ENCODE measurements at regions of chr12 and their contacts with region 1.

Region 1: GRCh38 chr12:99367181-99367580 is 280.4 kb upstream of the GARIN6 start:
- DNase-seq: no peak
- H3K4me3 ChIP-seq: no peak overlapping the region
- H3K27ac ChIP-seq: no peak overlapping the region
- H3K4me1 ChIP-seq: no peaks in the 10 kb centered on the region
- H3K27me3 ChIP-seq: no peaks in the 10 kb centered on the region
- CTCF ChIP-seq: no peak
- POLR2A ChIP-seq: no peak

Region 2: DNA sequence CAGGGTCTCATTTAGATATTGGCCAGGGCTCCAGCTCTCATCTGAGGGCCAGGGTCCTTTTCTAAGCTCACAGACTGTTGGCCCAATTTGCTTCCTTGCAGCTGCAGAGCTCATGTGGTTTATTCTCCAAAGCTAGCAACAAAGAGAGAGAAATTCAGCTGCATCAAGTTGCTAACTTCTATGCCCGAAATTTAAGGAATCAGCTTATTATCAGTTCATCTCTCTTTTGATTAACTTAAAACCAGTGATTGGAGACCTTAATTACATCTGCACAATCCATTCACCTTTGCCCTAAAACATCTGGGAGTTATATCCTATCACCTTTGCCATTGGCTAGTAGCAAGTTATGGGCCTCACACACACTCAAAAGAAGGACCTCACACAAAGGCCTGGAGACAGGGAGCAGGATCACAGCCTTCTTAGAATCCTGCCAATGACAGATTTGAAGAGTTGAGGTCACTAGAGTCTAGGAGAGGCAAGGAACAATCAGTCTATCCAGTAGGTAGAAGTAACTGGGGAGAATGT is 21.6 kb after region 1 on chr12:
- intact Hi-C with region 1: loop called (anchors 1 kb)
- DNase-seq: no peak
- H3K4me3 ChIP-seq: no peak overlapping the region
- H3K27ac ChIP-seq: no peak overlapping the region
- H3K4me1 ChIP-seq: no peaks in the 10 kb centered on the region
- H3K27me3 ChIP-seq: no peaks in the 10 kb centered on the region
- CTCF ChIP-seq: no peak
- POLR2A ChIP-seq: no peak

Measured in breast epithelium (tissue), 4 donors.